Activated CD4-positive, alpha-beta T cell treated with anti-CD3 and anti-CD28 coated beads for 36 hours (primary cell): ENCODE measurements at regions of chr3 and their contacts with region 1.

Region 1: DNA sequence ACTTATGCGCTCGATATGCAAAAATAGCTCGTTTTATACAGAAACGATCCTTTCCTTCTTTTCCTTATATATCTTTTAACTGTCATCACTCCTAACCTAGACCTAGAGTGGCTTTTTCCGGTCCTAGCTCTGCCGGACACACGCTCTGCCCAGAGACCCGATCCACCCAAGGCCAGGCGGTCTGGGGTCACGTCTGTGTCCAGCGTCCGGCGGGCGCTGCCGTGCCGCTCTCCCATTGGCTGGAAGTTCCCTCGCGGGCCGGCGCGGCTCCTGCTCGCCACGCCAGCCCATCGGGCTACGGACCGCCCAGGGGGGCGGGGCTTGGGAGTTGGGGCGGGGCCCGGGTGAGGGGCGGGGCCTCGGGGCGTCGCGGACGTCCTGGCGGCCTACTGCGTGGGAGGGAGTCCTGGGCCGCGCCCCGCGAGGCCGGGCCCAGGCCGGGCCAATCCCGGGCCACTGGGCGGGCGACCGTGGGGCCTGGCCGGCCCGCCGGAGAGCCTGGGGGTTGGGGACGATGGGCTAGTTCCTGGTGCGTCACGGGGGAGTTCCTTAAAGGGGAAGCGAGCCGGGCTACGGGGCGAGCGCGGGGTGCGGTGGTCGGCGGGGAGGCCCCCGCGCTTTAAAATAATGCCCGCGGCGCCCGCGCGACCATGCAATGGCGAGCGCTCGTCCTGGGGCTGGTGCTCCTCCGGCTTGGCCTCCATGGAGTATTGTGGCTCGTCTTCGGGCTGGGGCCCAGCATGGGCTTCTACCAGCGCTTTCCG is at the start of gene EDEM1:
- DNase-seq: peak; percentile 97
- ATAC-seq: peak; percentile 84
- H3K4me3 Mint-ChIP-seq: peak within 1 kb of the TSS; percentile 99
- H3K27ac Mint-ChIP-seq: peak within 1 kb of the TSS; percentile 99
- H3K4me1 Mint-ChIP-seq: peaks cover 23% of the 10 kb centered on the region
- H3K27me3 Mint-ChIP-seq: no peaks in the 10 kb centered on the region
- total RNA-seq, gene EDEM1: 105 to 175 TPM

Region 2: DNA sequence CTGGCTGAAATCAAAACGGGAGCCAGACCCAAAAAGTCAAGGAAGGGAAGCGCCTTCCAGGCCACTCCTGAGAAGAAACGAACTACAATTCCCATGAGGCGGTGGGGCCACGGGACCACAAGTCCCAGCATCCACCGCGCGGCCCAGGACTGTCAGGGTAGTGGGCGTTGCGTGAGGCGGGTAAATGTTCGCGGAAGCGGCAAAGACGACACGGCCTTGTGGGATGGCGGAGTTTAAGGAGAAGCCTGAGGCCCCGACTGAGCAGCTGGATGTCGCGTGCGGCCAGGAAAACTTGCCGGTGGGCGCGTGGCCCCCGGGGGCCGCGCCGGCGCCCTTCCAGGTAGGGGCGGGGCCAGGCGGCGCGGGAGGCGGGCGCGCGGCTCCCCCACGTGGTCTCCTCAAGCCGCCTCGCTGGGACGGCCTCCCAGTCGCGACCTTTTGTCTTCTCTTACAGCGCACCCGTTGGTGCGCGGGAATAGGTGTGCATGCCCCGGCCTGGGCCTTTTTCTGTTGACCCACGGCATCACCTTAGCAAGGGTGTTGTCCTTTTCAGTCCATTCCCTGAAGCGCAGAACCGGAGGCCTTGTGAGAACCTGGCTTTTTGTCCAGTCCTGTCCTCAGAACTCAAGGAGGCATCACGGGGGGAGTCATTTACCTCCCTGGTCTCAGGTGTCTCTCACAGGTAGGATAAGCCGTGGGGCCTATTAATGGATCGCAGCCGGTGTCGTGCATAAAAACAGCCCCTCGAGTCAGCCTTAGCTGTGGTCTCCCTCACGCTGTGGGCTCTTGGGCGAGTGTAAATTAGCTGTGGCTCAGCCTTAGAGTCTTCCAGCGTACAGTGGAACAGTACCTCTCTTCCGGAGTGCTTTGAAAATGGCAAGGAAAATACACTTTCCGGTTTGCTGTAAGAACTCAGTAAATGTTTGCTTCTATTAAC is 883.9 kb before region 1 on chr3 and contains the start of gene SETMAR:
- CTCF ChIA-PET with region 1: no interaction called
- POLR2A ChIA-PET with region 1: no interaction called
- intact Hi-C with region 1: loop called in 1 of 2 experiments (anchors 1 kb)
- DNase-seq: peak; percentile 93
- ATAC-seq: peak; percentile 96
- H3K4me3 Mint-ChIP-seq: peak within 1 kb of the TSS; percentile 79
- H3K27ac Mint-ChIP-seq: peak within 1 kb of the TSS; percentile 96
- H3K4me1 Mint-ChIP-seq: peaks cover 26% of the 10 kb centered on the region
- H3K27me3 Mint-ChIP-seq: no peaks in the 10 kb centered on the region
- total RNA-seq, gene SETMAR: 19.3 to 19.4 TPM

Region 3: DNA sequence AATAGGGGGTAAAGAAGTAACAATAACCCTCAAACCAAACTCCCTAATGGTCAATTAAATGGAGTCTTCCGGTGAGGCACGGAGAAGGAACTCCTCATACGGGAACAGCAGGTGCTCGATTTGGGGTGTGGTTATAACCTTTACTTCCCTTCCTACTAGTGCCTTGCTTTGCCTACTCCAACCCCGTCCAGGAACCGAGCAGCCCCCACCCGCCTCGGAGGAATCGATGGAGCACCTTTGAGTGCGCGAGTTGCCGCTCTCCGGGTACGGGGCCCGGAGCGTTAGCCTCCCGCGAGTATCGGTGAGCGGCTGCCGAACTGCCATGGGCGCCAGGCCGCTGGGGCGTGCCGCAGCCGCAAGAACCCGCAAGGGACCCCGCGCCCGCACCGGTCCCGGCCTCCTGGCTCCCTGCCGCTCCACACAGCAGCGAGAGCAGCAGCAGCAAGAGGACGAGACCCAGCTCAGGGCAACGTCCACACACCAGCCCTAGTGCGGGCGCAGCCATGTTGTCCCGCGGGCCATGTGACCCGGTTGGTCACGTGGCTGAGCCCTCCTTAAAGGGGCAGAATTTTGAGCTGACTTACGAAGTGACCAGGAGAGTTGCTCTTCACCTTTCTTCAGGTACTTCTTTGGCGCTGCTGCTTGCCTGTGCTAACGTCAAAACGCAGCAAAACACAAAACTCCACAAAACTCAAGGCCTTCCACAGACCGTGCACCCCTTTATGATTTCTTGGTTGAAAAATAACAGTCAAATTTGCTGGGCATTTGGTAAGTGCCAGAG is 720.4 kb before region 1 on chr3 and contains the start of gene SUMF1:
- CTCF ChIA-PET with region 1: no interaction called
- POLR2A ChIA-PET with region 1: no interaction called
- intact Hi-C with region 1: loop called in 1 of 2 experiments (anchors 1 kb)
- DNase-seq: peak; percentile 88
- ATAC-seq: peak; percentile 98
- H3K4me3 Mint-ChIP-seq: peak within 1 kb of the TSS; percentile 87
- H3K27ac Mint-ChIP-seq: peak within 1 kb of the TSS; percentile 93
- H3K4me1 Mint-ChIP-seq: peaks cover 18% of the 10 kb centered on the region
- H3K27me3 Mint-ChIP-seq: no peaks in the 10 kb centered on the region
- total RNA-seq, gene SUMF1: 3.5 to 4.9 TPM

Region 4: GRCh38 chr3:5136211-5136918 is 51.0 kb before region 1 on chr3:
- CTCF ChIA-PET with region 1: interaction called, 15 read pairs
- POLR2A ChIA-PET with region 1: no interaction called
- intact Hi-C with region 1: loop called in 1 of 2 experiments (anchors 1 kb)
- DNase-seq: peak; percentile 42
- ATAC-seq: peak; percentile 94
- H3K4me3 Mint-ChIP-seq: no peak overlapping the region
- H3K27ac Mint-ChIP-seq: peak overlapping the region; percentile 76
- H3K4me1 Mint-ChIP-seq: peaks cover 63% of the 10 kb centered on the region
- H3K27me3 Mint-ChIP-seq: no peaks in the 10 kb centered on the region